ENCODE measurements at regions of chr9 and their contacts with region 1.

Region 1: DNA sequence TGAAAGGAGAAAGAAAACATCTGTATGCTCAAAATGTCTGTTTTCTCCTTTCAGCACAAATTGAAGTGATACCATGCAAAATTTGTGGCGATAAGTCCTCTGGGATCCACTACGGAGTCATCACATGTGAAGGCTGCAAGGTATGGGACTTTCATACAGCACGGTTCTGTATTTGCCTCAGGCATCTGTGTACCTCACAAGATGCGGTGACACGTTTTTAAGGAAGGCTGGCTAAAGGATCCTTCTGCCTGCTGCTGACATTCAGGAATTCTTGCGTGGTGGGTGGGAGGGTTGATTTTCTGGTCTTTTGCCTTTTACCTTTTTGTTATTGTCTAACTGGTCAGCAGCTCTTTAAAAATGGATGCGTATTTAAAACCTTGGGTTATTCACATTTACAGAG is 133.1 kb downstream of the RORB start:
- DNase-seq: no peak
- ATAC-seq: no peak
- H3K4me3 ChIP-seq: no peak overlapping the region
- H3K27ac ChIP-seq: no peak overlapping the region
- H3K4me1 ChIP-seq: no peaks in the 10 kb centered on the region
- H3K27me3 ChIP-seq: no peaks in the 10 kb centered on the region
- CTCF ChIP-seq: no peak
- POLR2A ChIP-seq: no peak
- RAD21 ChIP-seq: no peak

Region 2: DNA sequence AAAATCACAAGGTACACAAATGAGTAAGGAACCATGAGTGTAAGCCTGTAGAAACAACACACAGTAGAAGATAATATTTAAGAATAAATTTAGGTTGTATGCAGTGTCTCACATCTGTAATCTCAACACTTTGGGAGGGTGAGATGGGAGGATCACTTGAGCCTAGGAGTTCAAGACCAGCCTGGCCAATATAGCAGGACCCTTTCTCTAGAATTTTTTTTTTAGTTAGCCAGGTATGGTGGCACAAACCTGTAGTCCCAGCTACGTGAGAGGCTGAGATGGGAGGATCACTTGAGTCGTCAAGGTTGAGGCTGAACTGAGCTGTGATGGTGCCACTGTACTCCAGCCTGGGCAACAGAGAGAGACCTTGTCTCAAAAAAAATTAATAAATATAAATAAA is 534.3 kb before region 1 on chr9:
- CTCF ChIA-PET with region 1: no interaction called
- POLR2A ChIA-PET with region 1: no interaction called
- dilution Hi-C with region 1: no loop called
- in situ Hi-C with region 1: no loop called
- intact Hi-C with region 1: no loop called
- DNase-seq: no peak
- ATAC-seq: no peak
- H3K4me3 ChIP-seq: no peak overlapping the region
- H3K27ac ChIP-seq: no peak overlapping the region
- H3K4me1 ChIP-seq: no peaks in the 10 kb centered on the region
- H3K27me3 ChIP-seq: no peaks in the 10 kb centered on the region
- CTCF ChIP-seq: no peak
- POLR2A ChIP-seq: no peak
- RAD21 ChIP-seq: no peak

Region 3: GRCh38 chr9:74609671-74610405 is 20.4 kb before region 1 on chr9:
- CTCF ChIA-PET with region 1: no interaction called
- POLR2A ChIA-PET with region 1: no interaction called
- dilution Hi-C with region 1: no loop called
- in situ Hi-C with region 1: no loop called
- intact Hi-C with region 1: loop called (anchors 2 kb)
- DNase-seq: no peak
- ATAC-seq: no peak
- H3K4me3 ChIP-seq: no peak overlapping the region
- H3K27ac ChIP-seq: no peak overlapping the region
- H3K4me1 ChIP-seq: no peaks in the 10 kb centered on the region
- H3K27me3 ChIP-seq: no peaks in the 10 kb centered on the region
- CTCF ChIP-seq: no peak
- POLR2A ChIP-seq: no peak
- RAD21 ChIP-seq: no peak

Measured in IMR-90 (cell line).